Activated naive CD4-positive, alpha-beta T cell treated with anti-CD3 and anti-CD28 coated beads for 36 hours (primary cell): ENCODE measurements at regions of chr1 and their contacts with region 1.

Region 1: GRCh38 chr1:110726755-110727154 is 52.0 kb upstream of the KCNA3 start:
- DNase-seq: no peak
- H3K4me3 Mint-ChIP-seq: no peak overlapping the region
- H3K27ac Mint-ChIP-seq: peak overlapping the region; percentile 22
- H3K4me1 Mint-ChIP-seq: peaks cover 31% of the 10 kb centered on the region
- H3K27me3 Mint-ChIP-seq: no peaks in the 10 kb centered on the region

Region 2: GRCh38 chr1:110686188-110686587 is 40.6 kb before region 1 on chr1:
- CTCF ChIA-PET with region 1: interaction called, 3 read pairs
- intact Hi-C with region 1: loop called (anchors 5 kb)
- DNase-seq: peak; percentile 19
- H3K4me3 Mint-ChIP-seq: no peak overlapping the region
- H3K27ac Mint-ChIP-seq: no peak overlapping the region
- H3K4me1 Mint-ChIP-seq: peaks cover 12% of the 10 kb centered on the region
- H3K27me3 Mint-ChIP-seq: no peaks in the 10 kb centered on the region

Region 3: GRCh38 chr1:110713221-110713620 is 13.5 kb before region 1 on chr1:
- CTCF ChIA-PET with region 1: interaction called, 3 read pairs
- intact Hi-C with region 1: loop called (anchors 2 kb)
- DNase-seq: no peak
- H3K4me3 Mint-ChIP-seq: no peak overlapping the region
- H3K27ac Mint-ChIP-seq: no peak overlapping the region
- H3K4me1 Mint-ChIP-seq: peaks cover 9% of the 10 kb centered on the region
- H3K27me3 Mint-ChIP-seq: no peaks in the 10 kb centered on the region